ENCODE measurements at regions of chr1 and their contacts with region 1.

Region 1: DNA sequence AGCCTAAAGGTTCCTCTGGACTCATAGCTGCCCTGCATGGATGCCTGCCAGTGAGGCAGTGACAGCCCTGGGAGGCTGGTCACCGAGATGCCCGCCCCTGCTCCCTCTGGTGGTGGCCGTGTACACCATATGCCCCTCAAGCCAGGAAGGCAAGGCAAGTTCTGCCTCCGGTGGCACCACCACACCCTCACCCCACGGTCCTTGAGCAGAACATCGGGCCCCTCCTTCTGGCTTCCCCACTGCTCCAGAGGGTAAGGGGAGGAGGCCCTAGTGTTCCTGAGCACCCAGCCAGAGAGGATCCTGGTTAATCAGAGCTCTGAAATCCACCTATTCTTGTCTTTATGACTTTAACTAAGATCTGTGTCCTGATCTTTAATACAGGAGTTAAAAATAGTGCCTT is 1.6 kb upstream of the S100A14 start:
- DNase-seq: peak; percentile 83
- H3K4me3 Mint-ChIP-seq: no peak overlapping the region
- H3K27ac Mint-ChIP-seq: peak overlapping the region; percentile 87
- H3K4me1 Mint-ChIP-seq: peaks cover 46% of the 10 kb centered on the region
- H3K27me3 Mint-ChIP-seq: no peaks in the 10 kb centered on the region
- CTCF ChIP-seq: peak; percentile 33

Region 2: GRCh38 chr1:153633716-153634665 is 16.3 kb after region 1 on chr1 and contains the start of gene CHTOP:
- CTCF ChIA-PET with region 1: interaction called, 99 read pairs
- intact Hi-C with region 1: no loop called
- DNase-seq: peak; percentile 99
- H3K4me3 Mint-ChIP-seq: peak within 1 kb of the TSS; percentile 98
- H3K27ac Mint-ChIP-seq: peak within 1 kb of the TSS; percentile 98
- H3K4me1 Mint-ChIP-seq: peaks cover 44% of the 10 kb centered on the region
- H3K27me3 Mint-ChIP-seq: no peaks in the 10 kb centered on the region
- CTCF ChIP-seq: no peak
- total RNA-seq, gene CHTOP: 93.7 and 100 TPM in 2 replicates

Region 3: DNA sequence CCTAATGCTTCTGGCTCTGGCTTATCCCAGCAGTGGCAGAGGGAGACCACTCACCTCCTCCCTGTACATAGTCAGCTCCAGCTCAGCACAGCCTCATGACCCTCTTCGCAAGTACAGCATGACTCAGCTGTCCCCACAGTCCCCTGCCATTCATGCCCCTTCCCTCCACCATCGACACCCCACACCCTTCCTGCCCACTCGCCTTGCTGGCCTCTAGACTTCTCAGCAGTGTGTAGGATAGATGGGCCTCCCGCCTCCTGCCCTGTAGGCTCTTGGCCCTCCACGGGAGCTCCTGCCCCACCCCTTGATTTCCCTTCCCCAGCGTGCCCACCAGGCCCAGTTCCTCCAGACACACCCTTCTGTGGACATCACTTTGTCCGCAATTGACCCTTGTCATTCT is 70.6 kb after region 1 on chr1:
- CTCF ChIA-PET with region 1: no interaction called
- intact Hi-C with region 1: no loop called
- DNase-seq: no peak
- H3K4me3 Mint-ChIP-seq: no peak overlapping the region
- H3K27ac Mint-ChIP-seq: no peak overlapping the region
- H3K4me1 Mint-ChIP-seq: peaks cover 16% of the 10 kb centered on the region
- H3K27me3 Mint-ChIP-seq: peaks cover 62% of the 10 kb centered on the region
- CTCF ChIP-seq: no peak

Region 4: DNA sequence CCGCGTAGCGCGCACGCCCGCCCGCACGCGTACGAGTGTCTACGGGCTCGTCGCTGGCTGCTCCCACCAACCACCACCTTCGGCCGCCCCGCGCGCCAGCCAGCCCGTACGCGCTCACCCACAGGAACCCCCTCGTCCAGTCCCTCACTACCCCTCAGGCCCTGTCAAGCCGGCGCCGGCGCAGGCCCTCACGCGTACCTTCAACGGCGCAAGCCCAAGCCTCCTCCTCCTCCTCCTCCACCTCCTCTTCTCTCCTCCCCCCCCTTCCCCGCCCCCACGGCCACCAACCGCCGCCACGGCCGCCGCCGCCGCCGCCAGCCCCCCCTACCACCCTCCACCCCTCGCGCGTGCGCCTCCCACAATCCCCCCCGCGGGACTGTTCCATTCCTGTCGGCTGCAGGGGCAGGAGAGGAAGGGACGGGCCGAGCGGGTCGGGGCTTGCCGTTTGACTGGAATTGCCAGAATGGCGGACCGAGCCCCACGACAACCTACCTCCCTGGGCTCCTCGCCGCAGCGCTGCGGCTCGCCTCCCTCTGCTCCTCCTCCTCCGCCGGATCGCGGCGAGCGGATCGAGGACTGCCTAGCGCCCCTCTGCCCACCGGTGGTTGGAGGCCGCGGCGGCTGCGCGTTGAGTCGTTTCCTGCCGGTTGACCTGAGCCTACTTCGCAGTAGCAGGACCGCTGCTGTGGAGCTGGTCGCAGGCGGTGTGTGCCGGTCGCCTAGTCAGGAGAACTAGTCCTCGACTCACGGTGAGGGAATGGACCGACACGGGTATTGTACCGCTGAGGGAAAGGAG is 1945.1 kb after region 1 on chr1 and contains the start of gene ASH1L:
- CTCF ChIA-PET with region 1: interaction called, 11 read pairs
- intact Hi-C with region 1: no loop called
- DNase-seq: peak; percentile 96
- H3K4me3 Mint-ChIP-seq: peak within 1 kb of the TSS; percentile 99
- H3K27ac Mint-ChIP-seq: peak within 1 kb of the TSS; percentile 98
- H3K4me1 Mint-ChIP-seq: peaks cover 17% of the 10 kb centered on the region
- H3K27me3 Mint-ChIP-seq: no peaks in the 10 kb centered on the region
- CTCF ChIP-seq: no peak
- total RNA-seq, gene ASH1L: 65.9 and 71.8 TPM in 2 replicates